ENCODE measurements at regions of chr1 and their contacts with region 1.

Region 1: DNA sequence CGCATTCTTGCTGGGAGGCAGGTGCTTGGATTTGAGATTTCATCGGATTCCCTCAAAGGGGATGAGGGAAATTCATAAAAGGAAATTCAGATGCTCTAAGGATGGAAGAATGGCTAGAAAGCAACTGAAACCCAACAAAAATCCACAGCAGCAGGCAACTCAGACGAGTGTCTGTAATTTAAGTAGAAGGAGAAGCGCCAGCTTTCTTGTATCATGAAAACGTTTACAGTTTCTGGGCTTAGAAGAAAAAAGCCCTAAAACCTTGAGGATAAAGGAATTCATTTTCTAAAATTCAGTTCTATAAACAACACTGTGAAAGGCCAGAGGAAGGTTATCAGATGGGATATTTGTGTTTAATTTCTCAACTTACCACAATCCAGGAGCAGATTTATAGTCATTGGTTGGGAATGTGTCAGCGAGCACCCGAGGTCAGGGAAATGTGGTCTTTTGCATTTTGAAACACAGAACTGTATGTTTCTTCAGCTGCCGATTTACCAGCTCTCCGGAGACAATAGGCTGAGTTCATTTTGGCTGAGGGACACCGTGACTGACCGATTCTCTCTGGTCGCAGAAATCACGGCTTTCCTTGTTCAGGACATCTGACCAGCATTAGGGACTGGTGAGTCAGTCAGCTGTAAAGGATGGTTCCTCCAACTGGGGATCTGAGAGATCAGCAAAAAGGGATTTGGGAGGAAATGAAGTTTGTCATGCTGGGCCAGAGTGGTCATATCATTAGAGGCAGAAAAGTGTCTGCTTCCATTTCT is 111.6 kb upstream of the ERRFI1 start:
- DNase-seq: peak; percentile 32 to 85
- H3K4me3 ChIP-seq: peak overlapping the region in 1 of 2 donors; percentile 25
- H3K27ac ChIP-seq: peak overlapping the region; percentile 81 to 95
- H3K4me1 ChIP-seq: peaks cover 19 to 35% of the 10 kb centered on the region in 2 donors
- H3K27me3 ChIP-seq: no peaks in the 10 kb centered on the region
- CTCF ChIP-seq: no peak

Region 2: GRCh38 chr1:8040586-8040985 is 97.1 kb before region 1 on chr1:
- intact Hi-C with region 1: loop called (anchors 5 kb)
- DNase-seq: peak; percentile 50 to 93
- H3K4me3 ChIP-seq: no peak overlapping the region
- H3K27ac ChIP-seq: peak overlapping the region; percentile 70 to 72
- H3K4me1 ChIP-seq: peaks cover 1 to 6% of the 10 kb centered on the region in 2 donors
- H3K27me3 ChIP-seq: no peaks in the 10 kb centered on the region
- CTCF ChIP-seq: no peak

Region 3: GRCh38 chr1:8061210-8061609 is 76.5 kb before region 1 on chr1:
- intact Hi-C with region 1: loop called (anchors 5 kb)
- DNase-seq: peak; percentile 28 to 84
- H3K4me3 ChIP-seq: peak overlapping the region in 1 of 2 donors; percentile 49
- H3K27ac ChIP-seq: peak overlapping the region; percentile 78 to 89
- H3K4me1 ChIP-seq: peaks cover 0 to 33% of the 10 kb centered on the region in 2 donors
- H3K27me3 ChIP-seq: no peaks in the 10 kb centered on the region
- CTCF ChIP-seq: no peak

Region 4: GRCh38 chr1:8077120-8077573 is 60.5 kb before region 1 on chr1:
- intact Hi-C with region 1: loop called (anchors 5 kb)
- DNase-seq: peak in 1 of 2 donors; percentile 89
- H3K4me3 ChIP-seq: no peak overlapping the region
- H3K27ac ChIP-seq: peak overlapping the region; percentile 31 to 79
- H3K4me1 ChIP-seq: peaks cover 14 to 30% of the 10 kb centered on the region in 2 donors
- H3K27me3 ChIP-seq: no peaks in the 10 kb centered on the region
- CTCF ChIP-seq: peak in 1 of 3 experiments; percentile 17

Region 5: DNA sequence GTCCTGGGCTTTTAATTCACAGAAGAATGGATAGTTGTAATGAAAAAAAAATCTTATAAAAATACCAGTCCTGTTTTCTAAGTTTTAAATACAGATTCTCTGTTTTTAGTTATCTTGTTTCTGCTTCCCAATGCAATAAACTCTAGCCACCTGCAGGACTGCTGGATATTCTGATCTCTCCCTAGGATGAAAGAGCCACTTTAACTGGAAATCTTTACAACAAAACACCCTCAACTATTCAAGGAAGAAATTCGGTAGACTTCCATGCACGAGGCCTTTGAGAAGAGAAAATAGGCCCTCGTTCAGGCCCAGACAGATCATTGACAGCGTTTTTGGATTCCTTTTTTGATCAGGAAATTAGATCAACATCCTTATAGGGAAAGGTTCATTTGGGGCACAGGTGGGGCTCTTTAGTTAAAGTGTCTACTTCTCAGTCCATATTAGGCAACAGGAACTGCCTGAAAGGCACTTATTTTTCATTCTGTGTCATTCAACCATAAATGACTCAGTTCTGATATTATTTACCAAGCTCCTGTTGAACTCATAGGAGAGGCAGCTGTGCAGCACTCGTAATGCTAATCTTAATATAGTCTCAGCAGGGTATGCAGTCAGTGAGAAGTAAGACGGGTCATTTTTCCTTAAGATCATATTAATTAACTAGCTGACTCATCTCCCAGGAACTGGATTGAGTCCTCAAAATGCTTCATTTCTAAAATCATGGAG is 40.4 kb before region 1 on chr1:
- intact Hi-C with region 1: loop called (anchors 2 kb)
- DNase-seq: no peak
- H3K4me3 ChIP-seq: no peak overlapping the region
- H3K27ac ChIP-seq: peak overlapping the region; percentile 82 to 85
- H3K4me1 ChIP-seq: peaks cover 6 to 22% of the 10 kb centered on the region in 2 donors
- H3K27me3 ChIP-seq: no peaks in the 10 kb centered on the region
- CTCF ChIP-seq: no peak

Region 6: GRCh38 chr1:8121261-8122170 is 16.1 kb before region 1 on chr1:
- intact Hi-C with region 1: loop called (anchors 1 kb)
- DNase-seq: peak; percentile 67 to 95
- H3K4me3 ChIP-seq: peak overlapping the region; percentile 1 to 49
- H3K27ac ChIP-seq: peak overlapping the region; percentile 95 to 96
- H3K4me1 ChIP-seq: peaks cover 25 to 61% of the 10 kb centered on the region in 2 donors
- H3K27me3 ChIP-seq: no peaks in the 10 kb centered on the region
- CTCF ChIP-seq: no peak

Region 7: GRCh38 chr1:8202182-8202905 is 64.7 kb after region 1 on chr1:
- intact Hi-C with region 1: loop called (anchors 2 kb)
- DNase-seq: peak; percentile 57 to 94
- H3K4me3 ChIP-seq: peak overlapping the region in 1 of 2 donors; percentile 32
- H3K27ac ChIP-seq: peak overlapping the region; percentile 97 to 99
- H3K4me1 ChIP-seq: peaks cover 17 to 52% of the 10 kb centered on the region in 2 donors
- H3K27me3 ChIP-seq: no peaks in the 10 kb centered on the region
- CTCF ChIP-seq: no peak

Measured in ascending aorta (tissue), 2 donors.